Left colon (tissue), 2 donors: ENCODE measurements at regions of chr1 and their contacts with region 1.

Region 1: DNA sequence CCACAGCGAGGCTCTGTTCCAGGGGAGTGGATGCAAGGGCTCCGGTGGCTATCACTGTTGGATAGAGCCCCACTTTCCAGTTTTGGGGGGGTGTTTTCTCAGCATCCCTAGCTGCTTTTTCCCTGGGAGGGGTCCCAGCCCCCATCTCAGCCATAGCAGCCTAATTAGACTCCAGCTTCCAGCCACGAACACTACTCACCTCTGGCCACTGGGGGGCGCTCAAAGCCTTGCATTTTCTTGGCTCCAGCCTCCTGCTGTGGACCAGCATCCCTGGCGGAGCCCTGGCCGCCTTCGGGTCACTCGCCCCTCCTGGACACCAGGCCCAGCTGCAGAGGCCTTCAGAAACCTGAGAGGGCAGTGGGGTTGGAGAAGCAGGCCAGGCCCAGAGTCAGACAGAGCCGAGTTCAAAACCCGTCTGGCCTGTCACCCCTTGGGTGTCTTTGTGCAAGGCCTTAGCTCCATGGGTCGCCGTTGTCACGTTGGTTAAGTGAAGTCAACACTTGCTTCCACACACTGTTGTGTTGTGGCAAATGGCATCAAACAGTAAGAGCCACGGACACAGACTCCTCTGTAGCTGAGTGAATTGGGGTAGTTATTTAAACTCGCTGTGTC is 93.5 kb upstream of the ACTL8 start:
- DNase-seq: peak in 1 of 2 donors; percentile 55
- ATAC-seq: peak; percentile 30

Region 2: DNA sequence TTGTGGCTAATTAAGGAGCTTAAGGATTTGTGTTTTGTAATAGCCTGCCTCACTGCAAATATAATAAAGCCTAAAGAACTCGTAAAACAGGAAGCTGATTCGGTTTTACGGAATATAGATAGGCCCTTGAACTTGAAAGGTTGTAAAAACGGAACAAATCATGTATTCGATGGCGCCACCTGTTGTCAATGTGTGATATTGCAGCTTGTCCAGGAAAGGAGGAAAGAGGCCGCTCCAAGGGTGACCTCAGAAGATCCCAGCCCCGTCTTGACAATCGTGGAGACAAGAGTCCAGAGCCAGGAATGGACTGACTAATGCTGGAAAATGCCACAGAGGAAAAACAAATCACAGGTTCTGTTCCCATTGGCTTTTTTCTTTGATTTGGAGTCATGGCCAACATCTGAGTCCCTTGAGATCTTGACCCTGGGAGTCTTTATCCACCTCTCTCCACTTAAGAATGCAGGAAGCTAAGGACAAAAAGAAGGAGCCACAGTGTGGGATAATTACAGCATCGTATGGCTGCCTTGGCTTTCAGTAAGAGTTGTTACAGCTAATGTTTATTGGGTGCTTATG is 438.9 kb after region 1 on chr1:
- intact Hi-C with region 1: loop called in 1 of 2 experiments (anchors 10 kb)
- DNase-seq: peak; percentile 53 to 81
- ATAC-seq: peak; percentile 87